ENCODE measurements at regions of chr4 and their contacts with region 1.

Region 1: DNA sequence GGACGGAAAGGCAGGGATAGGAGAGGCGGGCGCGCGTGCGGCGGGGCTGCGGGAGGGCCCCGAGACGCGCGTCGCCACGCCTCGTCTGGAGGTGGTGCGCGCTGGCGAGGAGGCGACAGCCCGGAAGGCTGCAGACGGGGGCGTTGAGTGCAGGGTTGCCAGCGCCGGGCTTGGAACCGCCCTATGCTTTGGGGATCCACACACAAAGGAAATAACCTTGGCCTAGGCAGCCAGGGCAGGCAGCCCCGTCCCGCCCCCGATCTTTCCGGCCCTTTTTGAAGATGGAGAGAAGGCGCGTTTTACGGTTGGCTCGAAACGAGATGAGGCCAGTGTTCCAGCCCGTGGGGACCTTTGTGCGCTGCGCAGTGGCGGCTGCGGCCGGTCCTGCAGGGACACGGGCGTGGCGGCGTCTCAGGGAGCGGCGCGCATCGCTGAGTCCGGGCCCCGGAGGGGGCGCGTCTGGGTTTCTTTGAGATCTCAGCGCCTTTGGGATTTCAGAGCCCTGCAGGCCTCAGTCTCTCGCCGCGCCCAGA is 50.8 kb upstream of the TRIM2 start:
- DNase-seq: peak; percentile 68 to 90 (median 84)
- H3K4me3 ChIP-seq: peak overlapping the region; percentile 54 to 83 (median 65)
- H3K27ac ChIP-seq: peak overlapping the region in 1 of 2 experiments; percentile 51
- H3K4me1 ChIP-seq: peaks cover 7 to 37% (median 32%) of the 10 kb centered on the region in 4 experiments
- H3K27me3 ChIP-seq: peaks cover 0 to 3% (median 0%) of the 10 kb centered on the region in 5 experiments

Region 2: GRCh38 chr4:153038623-153039311 is 114.6 kb before region 1 on chr4:
- CTCF ChIA-PET with region 1: no interaction called
- POLR2A ChIA-PET with region 1: no interaction called
- DNase-seq: peak; percentile 2 to 32 (median 24)
- H3K4me3 ChIP-seq: peak overlapping the region in 1 of 7 experiments; percentile 25
- H3K27ac ChIP-seq: no peak overlapping the region
- H3K4me1 ChIP-seq: peaks cover 0 to 17% (median 3%) of the 10 kb centered on the region in 4 experiments
- H3K27me3 ChIP-seq: no peaks in the 10 kb centered on the region

Region 3: GRCh38 chr4:153142700-153143438 is 10.5 kb before region 1 on chr4:
- CTCF ChIA-PET with region 1: interaction called, 138 read pairs
- POLR2A ChIA-PET with region 1: interaction called, 3 read pairs
- DNase-seq: peak; percentile 74 to 88 (median 85)
- H3K4me3 ChIP-seq: peak overlapping the region in 2 of 7 experiments; percentile 35 to 59
- H3K27ac ChIP-seq: no peak overlapping the region
- H3K4me1 ChIP-seq: peaks cover 0 to 42% (median 24%) of the 10 kb centered on the region in 4 experiments
- H3K27me3 ChIP-seq: no peaks in the 10 kb centered on the region

Measured in common myeloid progenitor, CD34-positive (primary cell).